Transverse colon (tissue), 4 donors: ENCODE measurements at regions of chr1 and their contacts with region 1.

Region 1: GRCh38 chr1:25796811-25797458 is 3.1 kb upstream of the SELENON start:
- DNase-seq: peak; percentile 90
- H3K4me3 ChIP-seq: no peak overlapping the region
- H3K27ac ChIP-seq: peak overlapping the region in 1 of 4 donors; percentile 8
- H3K4me1 ChIP-seq: peaks cover 17 to 23% (median 18%) of the 10 kb centered on the region in 4 donors
- H3K27me3 ChIP-seq: no peaks in the 10 kb centered on the region
- CTCF ChIP-seq: peak; percentile 71 to 85 (median 75)
- EP300 ChIP-seq: no peak
- POLR2A ChIP-seq: no peak

Region 2: GRCh38 chr1:25223471-25223870 is 573.5 kb before region 1 on chr1:
- in situ Hi-C with region 1: no loop called
- intact Hi-C with region 1: no loop called
- DNase-seq: no peak
- H3K4me3 ChIP-seq: no peak overlapping the region
- H3K27ac ChIP-seq: no peak overlapping the region
- H3K4me1 ChIP-seq: peaks cover 0 to 17% (median 5%) of the 10 kb centered on the region in 4 donors
- H3K27me3 ChIP-seq: no peaks in the 10 kb centered on the region
- CTCF ChIP-seq: no peak
- EP300 ChIP-seq: no peak
- POLR2A ChIP-seq: no peak

Region 3: DNA sequence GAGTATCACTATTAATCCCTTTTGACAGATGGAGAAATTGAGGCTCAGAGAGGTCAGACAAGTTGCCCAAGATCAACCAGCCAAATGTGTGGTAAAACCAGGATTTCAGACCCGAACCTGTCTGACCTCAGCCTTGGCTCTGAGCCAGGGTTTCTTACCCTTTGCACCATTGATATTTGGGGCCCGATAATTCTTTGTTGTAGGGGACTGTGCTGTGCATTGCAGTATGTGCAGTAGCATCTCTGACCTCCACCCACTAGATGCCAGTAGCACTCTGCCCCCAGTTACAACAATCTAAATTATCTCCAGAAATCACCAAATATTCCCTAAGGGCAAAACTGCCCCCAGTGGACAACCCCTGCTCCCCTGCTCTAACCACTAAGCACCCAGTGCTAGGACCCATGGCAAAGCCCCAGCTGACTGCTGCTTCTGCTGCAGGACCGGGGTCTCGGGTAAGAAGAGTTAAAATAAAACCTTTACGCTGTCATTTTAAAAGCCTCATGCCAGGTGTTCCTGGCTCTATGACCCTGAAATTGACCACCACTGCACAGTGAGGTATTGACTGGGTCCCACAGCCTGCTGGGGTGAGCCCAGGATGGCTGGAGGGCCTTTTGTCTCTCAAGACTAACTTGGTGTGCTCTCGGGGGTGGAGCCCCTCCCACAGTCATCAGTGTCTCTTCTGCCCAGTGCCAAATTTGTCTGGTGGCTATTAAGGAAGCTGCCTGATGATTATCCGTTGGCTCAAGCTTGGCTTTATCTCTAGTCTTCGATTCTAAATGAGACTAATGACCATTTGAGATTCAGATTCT is 185.9 kb before region 1 on chr1:
- in situ Hi-C with region 1: loop called (anchors 5 to 25 kb)
- intact Hi-C with region 1: loop called (anchors 5 kb)
- DNase-seq: no peak
- H3K4me3 ChIP-seq: no peak overlapping the region
- H3K27ac ChIP-seq: no peak overlapping the region
- H3K4me1 ChIP-seq: peaks cover 3 to 27% (median 9%) of the 10 kb centered on the region in 4 donors
- H3K27me3 ChIP-seq: peaks cover 33% of the 10 kb centered on the region
- CTCF ChIP-seq: no peak
- EP300 ChIP-seq: no peak
- POLR2A ChIP-seq: no peak

Region 4: DNA sequence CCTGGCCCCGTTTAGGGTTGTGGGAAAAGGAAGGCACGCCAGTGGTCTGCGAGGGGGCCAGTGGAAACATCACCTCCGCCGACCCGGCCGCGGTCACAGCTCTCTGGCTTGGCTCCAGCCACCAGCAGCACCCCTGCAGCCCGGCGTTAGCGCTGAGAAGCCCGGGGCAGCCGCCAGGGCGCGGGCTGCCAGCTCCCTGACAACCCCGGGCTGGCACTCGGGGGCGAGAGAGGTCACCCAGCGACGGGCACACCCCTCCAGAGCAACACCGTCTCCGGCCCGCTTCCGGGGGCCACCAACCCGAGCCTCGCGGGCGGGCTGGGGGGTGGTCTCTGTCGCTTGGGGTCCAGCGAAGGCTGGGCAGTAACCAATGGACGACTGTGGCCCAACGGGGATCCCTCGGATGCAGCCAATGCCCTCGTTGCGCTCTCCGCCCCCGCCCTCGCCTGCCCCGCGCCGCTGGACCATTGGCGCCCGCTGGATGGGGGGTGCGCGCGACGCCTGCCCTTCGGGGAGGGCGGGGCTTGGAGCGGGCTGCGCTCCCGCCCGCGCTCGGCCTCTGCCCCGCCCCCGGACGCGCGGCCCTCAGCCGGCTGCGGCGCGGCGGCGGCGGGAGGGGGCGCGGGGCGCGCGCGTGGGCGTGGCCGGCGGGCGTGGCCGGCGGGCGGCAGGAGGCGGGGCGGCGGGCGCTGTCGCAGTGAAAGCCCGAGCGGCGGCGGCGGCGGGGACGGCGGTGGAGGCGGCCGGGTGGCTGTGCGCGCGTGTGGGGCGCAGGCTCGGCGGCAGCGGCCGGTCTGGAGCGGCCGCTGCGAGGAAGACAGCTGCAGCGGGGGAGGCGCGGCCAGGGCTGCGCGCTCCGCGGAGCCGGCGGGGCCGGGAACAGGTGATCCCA is 180.6 kb before region 1 on chr1 and contains the start of gene MAN1C1:
- in situ Hi-C with region 1: loop called (anchors 5 to 25 kb)
- intact Hi-C with region 1: loop called (anchors 5 kb)
- DNase-seq: peak; percentile 87
- H3K4me3 ChIP-seq: peak within 1 kb of the TSS; percentile 69 to 97 (median 90)
- H3K27ac ChIP-seq: peak within 1 kb of the TSS; percentile 75 to 90 (median 82)
- H3K4me1 ChIP-seq: peaks cover 9 to 39% (median 26%) of the 10 kb centered on the region in 4 donors
- H3K27me3 ChIP-seq: peaks cover 24% of the 10 kb centered on the region
- CTCF ChIP-seq: peak; percentile 40 to 61 (median 55)
- EP300 ChIP-seq: no peak
- POLR2A ChIP-seq: no peak
- total RNA-seq, gene MAN1C1: 2.4 to 6.8 (median 4.3) TPM

Region 5: DNA sequence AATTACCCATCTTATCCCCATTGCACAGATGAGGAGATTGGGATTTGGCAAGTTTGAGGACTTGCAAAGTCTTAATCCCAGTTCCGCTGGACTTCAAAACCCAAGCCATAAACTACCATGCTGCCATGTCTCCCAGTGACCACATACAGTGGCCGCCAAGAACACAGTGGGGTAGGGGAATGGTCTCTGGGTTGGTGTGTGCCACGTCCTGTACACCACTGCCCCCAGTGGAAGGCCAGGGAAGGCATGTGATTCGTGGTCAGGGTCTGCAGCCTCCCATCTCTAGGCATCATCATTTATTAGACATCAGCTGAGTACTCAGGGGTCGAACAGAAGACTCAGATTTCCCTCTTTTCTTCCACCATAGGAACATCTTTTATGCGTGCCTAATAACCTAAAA is 104.4 kb before region 1 on chr1:
- in situ Hi-C with region 1: no loop called
- intact Hi-C with region 1: no loop called
- DNase-seq: no peak
- H3K4me3 ChIP-seq: no peak overlapping the region
- H3K27ac ChIP-seq: no peak overlapping the region
- H3K4me1 ChIP-seq: peaks cover 5 to 51% (median 25%) of the 10 kb centered on the region in 4 donors
- H3K27me3 ChIP-seq: no peaks in the 10 kb centered on the region
- CTCF ChIP-seq: peak in 4 of 5 experiments; percentile 14 to 33 (median 26)
- EP300 ChIP-seq: no peak
- POLR2A ChIP-seq: no peak

Region 6: GRCh38 chr1:25858494-25858893 is 61.6 kb after region 1 on chr1:
- in situ Hi-C with region 1: no loop called
- intact Hi-C with region 1: no loop called
- DNase-seq: no peak
- H3K4me3 ChIP-seq: peak overlapping the region in 2 of 4 donors; percentile 43 to 64
- H3K27ac ChIP-seq: peak overlapping the region in 1 of 4 donors; percentile 73
- H3K4me1 ChIP-seq: peaks cover 6 to 26% (median 16%) of the 10 kb centered on the region in 4 donors
- H3K27me3 ChIP-seq: no peaks in the 10 kb centered on the region
- CTCF ChIP-seq: no peak
- EP300 ChIP-seq: no peak
- POLR2A ChIP-seq: no peak

Region 7: DNA sequence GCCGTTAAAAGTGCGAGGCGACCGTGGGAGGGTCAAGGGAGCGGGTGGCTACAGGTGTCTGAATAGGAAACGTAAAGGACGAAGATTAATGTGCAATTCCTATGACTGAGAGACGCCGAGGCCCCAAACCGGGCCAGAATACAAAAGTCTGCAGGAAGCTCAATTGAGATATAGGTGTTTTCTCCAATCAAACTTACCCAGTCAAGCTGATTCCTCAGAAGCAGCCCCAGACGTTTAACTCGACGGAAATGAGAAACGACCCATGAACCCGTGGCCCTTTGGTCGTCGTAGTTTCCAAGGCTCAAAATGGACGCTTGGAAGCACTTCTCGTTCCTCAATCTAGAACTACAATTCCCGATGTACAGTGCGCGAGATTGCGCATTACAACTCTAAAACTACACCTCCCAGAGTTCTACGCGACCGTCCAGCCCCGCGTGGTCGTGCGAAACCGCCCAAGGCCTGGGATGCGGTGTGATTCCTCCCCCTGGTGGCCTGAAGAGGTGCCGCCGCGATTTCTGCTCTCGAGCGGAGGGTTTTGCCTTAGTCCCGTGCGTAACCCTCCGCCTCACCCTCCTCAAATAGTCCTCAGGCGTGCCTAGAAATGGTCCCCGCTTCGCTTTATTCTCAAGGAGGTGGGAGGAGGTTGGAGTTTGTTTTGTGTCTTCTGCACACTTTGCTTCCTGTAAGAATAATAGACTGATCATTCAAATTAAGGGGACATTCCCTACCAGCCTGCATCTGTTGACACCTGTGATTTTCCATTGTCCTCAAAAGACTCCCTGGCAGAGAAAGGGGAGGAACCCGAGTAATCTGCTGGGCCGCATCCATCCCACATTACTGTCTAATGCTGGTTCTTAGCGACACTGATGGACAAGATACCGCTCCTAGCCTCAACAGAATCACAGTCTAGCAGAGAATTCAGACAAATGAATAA is 201.2 kb after region 1 on chr1 and contains the start of gene PAFAH2:
- in situ Hi-C with region 1: no loop called
- intact Hi-C with region 1: loop called (anchors 5 kb)
- DNase-seq: peak; percentile 98
- H3K4me3 ChIP-seq: peak within 1 kb of the TSS; percentile 49 to 86 (median 57)
- H3K27ac ChIP-seq: peak within 1 kb of the TSS; percentile 90 to 96 (median 92)
- H3K4me1 ChIP-seq: peaks cover 4 to 18% (median 11%) of the 10 kb centered on the region in 4 donors
- H3K27me3 ChIP-seq: no peaks in the 10 kb centered on the region
- CTCF ChIP-seq: peak; percentile 87 to 100 (median 95)
- EP300 ChIP-seq: no peak
- POLR2A ChIP-seq: peak; percentile 60
- total RNA-seq, gene PAFAH2: 23.1 to 60.1 (median 38.8) TPM